ENCODE measurements at regions of chr22 and their contacts with region 1.

Region 1: GRCh38 chr22:35627264-35628041 is 10.3 kb upstream of the MB start:
- DNase-seq: peak; percentile 91 to 92
- H3K4me3 ChIP-seq: peak overlapping the region; percentile 13 to 75 (median 39)
- H3K27ac ChIP-seq: peak overlapping the region; percentile 90 to 97 (median 91)
- H3K4me1 ChIP-seq: peaks cover 22 to 31% of the 10 kb centered on the region in 2 donors
- H3K27me3 ChIP-seq: no peaks in the 10 kb centered on the region
- CTCF ChIP-seq: peak in 4 of 6 experiments; percentile 60 to 84 (median 72)
- POLR2A ChIP-seq: peak in 1 of 2 donors; percentile 82

Region 2: GRCh38 chr22:35812600-35812999 is 185.1 kb after region 1 on chr22:
- intact Hi-C with region 1: no loop called
- DNase-seq: no peak
- H3K4me3 ChIP-seq: no peak overlapping the region
- H3K27ac ChIP-seq: no peak overlapping the region
- H3K4me1 ChIP-seq: peaks cover 14 to 17% of the 10 kb centered on the region in 2 donors
- H3K27me3 ChIP-seq: no peaks in the 10 kb centered on the region
- CTCF ChIP-seq: no peak
- POLR2A ChIP-seq: no peak

Region 3: GRCh38 chr22:35914665-35915476 is 287.4 kb after region 1 on chr22:
- intact Hi-C with region 1: loop called (anchors 5 kb)
- DNase-seq: peak; percentile 69 to 73
- H3K4me3 ChIP-seq: peak overlapping the region in 2 of 3 donors; percentile 5 to 7
- H3K27ac ChIP-seq: peak overlapping the region; percentile 62 to 86 (median 81)
- H3K4me1 ChIP-seq: peaks cover 41 to 65% of the 10 kb centered on the region in 2 donors
- H3K27me3 ChIP-seq: no peaks in the 10 kb centered on the region
- CTCF ChIP-seq: no peak
- POLR2A ChIP-seq: peak in 1 of 2 donors; percentile 61

Region 4: DNA sequence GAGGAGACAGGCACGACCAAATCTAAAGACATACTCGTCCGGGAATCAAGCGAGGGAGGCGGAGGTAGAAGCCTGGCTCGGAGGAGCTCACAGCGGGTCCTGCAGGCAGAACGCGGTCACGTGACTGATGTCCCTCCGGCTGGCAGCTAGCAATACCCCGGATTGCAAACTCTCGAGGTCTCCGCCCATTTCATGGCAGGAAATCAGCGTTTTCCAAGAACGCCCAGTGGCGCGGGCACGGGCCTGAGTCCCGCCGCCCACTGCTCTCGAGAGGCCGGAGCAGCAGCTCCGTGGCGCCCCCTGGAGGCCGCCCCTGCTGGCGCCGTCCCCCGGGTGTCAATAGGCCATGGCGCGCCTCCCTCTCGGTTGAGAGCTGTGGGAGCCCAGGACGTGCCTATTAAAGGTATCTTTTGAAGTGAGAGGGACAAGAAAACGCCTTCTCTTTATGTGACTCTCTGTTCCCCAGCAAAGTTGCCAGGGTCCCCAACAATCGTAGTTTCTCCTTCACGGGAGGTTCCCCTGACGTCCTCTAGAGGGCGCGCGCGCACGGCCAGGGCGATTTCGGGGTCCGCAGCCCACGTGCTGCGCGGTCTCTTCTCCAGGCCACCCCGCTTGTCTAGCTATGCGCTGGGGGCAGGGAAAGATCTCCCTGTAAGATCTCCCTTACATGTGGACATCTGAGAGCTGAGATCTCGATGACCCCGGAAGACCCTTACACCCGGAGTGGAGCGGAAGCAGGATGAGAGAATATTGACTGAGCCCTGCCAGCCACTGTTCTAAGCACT is 438.5 kb after region 1 on chr22:
- intact Hi-C with region 1: loop called (anchors 10 kb)
- DNase-seq: peak; percentile 97
- H3K4me3 ChIP-seq: peak overlapping the region in 2 of 3 donors; percentile 4 to 43
- H3K27ac ChIP-seq: peak overlapping the region; percentile 73 to 93 (median 87)
- H3K4me1 ChIP-seq: no peaks in the 10 kb centered on the region
- H3K27me3 ChIP-seq: no peaks in the 10 kb centered on the region
- CTCF ChIP-seq: peak; percentile 98 to 100 (median 100)
- POLR2A ChIP-seq: peak in 1 of 2 donors; percentile 75

Measured in thyroid gland (tissue), 4 donors.